Endothelial cell of umbilical vein (primary cell): ENCODE measurements at regions of chr7 and their contacts with region 1.

Region 1: GRCh38 chr7:35424869-35425495 is 171.1 kb upstream of the TBX20 start:
- DNase-seq: peak; percentile 53
- H3K4me3 ChIP-seq: no peak overlapping the region
- H3K27ac ChIP-seq: no peak overlapping the region
- H3K4me1 ChIP-seq: no peaks in the 10 kb centered on the region
- H3K27me3 ChIP-seq: peaks cover 0 to 5% of the 10 kb centered on the region in 2 experiments
- CTCF ChIP-seq: peak; percentile 68 to 79
- POLR2A ChIP-seq: no peak

Region 2: DNA sequence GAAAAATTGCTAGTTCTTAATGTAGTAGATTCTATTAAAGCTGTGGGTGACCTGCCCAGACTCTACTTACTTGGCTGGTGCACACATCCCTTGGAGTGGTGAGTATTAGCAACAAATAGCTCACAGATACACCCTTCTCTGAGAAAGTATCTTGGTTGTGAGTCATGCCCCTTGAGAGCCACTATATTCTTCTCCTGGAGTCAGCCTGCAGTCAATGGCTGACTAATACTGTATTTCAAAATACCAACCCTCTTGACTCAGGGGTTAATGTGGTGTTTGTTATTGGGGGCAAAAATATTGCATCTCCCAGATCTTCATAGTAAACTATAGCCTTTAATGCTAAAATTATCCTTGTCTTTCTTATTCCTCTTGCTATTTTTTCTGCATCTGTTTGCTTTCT is 1164.7 kb before region 1 on chr7:
- CTCF ChIA-PET with region 1: no interaction called
- POLR2A ChIA-PET with region 1: no interaction called
- dilution Hi-C with region 1: no loop called
- intact Hi-C with region 1: no loop called
- DNase-seq: peak; percentile 57
- H3K4me3 ChIP-seq: no peak overlapping the region
- H3K27ac ChIP-seq: no peak overlapping the region
- H3K4me1 ChIP-seq: peaks cover 4% of the 10 kb centered on the region
- H3K27me3 ChIP-seq: no peaks in the 10 kb centered on the region
- CTCF ChIP-seq: no peak
- POLR2A ChIP-seq: no peak

Region 3: GRCh38 chr7:35185907-35186731 is 238.9 kb before region 1 on chr7:
- CTCF ChIA-PET with region 1: no interaction called
- POLR2A ChIA-PET with region 1: no interaction called
- dilution Hi-C with region 1: no loop called
- intact Hi-C with region 1: loop called (anchors 10 kb)
- DNase-seq: peak; percentile 24
- H3K4me3 ChIP-seq: peak overlapping the region; percentile 8 to 34 (median 11)
- H3K27ac ChIP-seq: no peak overlapping the region
- H3K4me1 ChIP-seq: peaks cover 8% of the 10 kb centered on the region
- H3K27me3 ChIP-seq: peaks cover 7 to 17% of the 10 kb centered on the region in 2 experiments
- CTCF ChIP-seq: no peak
- POLR2A ChIP-seq: no peak

Region 4: DNA sequence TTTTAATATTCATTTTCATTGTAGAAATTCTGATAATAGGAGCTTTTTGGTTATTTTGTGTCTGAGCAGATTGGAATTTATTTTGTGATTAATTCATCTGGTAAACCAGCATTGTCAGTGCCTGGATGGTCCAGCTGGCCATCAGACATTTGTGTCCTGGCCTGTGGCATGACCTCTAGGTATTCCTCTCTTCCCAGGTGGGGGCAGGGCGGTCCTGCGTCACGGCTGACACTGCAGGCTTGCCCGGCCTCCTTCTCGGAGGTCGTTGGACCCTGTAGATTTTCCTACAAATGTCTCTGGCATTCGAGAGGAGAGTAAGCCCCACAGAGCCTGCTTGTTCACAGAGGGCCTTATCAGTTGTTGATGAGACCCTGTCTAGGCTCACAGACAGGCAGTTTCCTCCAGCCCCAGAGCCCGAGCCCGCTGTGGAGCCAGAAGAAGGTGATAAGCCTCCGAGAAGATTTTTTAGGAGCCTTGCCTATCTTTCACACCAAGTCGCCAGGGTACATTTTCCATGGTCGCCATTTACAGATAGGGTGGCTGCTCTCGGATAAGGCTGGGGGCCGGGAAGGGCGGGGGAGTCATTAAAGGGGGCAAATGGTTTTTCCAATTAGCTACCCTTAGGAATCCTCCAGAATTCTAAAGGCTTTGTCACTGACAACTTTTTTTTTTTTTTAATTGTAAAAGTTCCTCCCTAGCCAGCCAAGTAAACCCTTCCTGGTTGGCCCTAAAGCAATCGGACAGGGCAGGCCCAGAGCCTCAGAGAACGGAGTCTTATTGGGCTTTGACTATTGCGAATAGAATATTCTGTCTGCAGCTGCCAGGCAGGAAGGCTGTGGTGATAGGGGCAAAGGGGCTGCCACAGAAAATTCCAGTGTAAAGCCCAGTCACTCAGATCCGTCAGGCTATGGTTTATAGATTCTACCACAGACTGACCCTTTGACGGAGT is 93.0 kb before region 1 on chr7:
- CTCF ChIA-PET with region 1: no interaction called
- POLR2A ChIA-PET with region 1: no interaction called
- dilution Hi-C with region 1: no loop called
- intact Hi-C with region 1: no loop called
- DNase-seq: no peak
- H3K4me3 ChIP-seq: no peak overlapping the region
- H3K27ac ChIP-seq: no peak overlapping the region
- H3K4me1 ChIP-seq: no peaks in the 10 kb centered on the region
- H3K27me3 ChIP-seq: no peaks in the 10 kb centered on the region
- CTCF ChIP-seq: no peak
- POLR2A ChIP-seq: no peak

Region 5: DNA sequence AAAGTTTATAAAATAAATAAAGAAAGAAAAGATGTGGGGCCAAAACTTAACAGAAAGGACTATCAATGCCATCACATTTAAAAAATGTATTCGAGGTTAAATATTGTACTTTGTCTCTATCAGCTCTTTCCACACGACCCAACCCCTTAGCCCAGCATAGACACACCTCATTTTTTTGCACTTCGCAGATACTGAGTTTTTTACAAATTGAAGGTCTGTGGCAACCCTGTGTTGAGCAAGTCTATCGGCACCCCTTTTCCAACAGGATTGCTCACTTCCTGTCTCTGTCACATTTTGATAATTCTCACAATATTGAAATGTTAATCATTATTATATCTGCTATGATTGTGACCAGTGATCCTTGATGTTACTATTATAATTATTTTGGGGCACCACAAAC is 19.5 kb before region 1 on chr7:
- CTCF ChIA-PET with region 1: interaction called, 11 read pairs
- POLR2A ChIA-PET with region 1: no interaction called
- dilution Hi-C with region 1: no loop called
- intact Hi-C with region 1: no loop called
- DNase-seq: no peak
- H3K4me3 ChIP-seq: no peak overlapping the region
- H3K27ac ChIP-seq: no peak overlapping the region
- H3K4me1 ChIP-seq: no peaks in the 10 kb centered on the region
- H3K27me3 ChIP-seq: no peaks in the 10 kb centered on the region
- CTCF ChIP-seq: no peak
- POLR2A ChIP-seq: no peak

Region 6: GRCh38 chr7:35436452-35436851 is 11.5 kb after region 1 on chr7:
- CTCF ChIA-PET with region 1: interaction called, 17 read pairs
- POLR2A ChIA-PET with region 1: no interaction called
- dilution Hi-C with region 1: no loop called
- intact Hi-C with region 1: no loop called
- DNase-seq: no peak
- H3K4me3 ChIP-seq: no peak overlapping the region
- H3K27ac ChIP-seq: no peak overlapping the region
- H3K4me1 ChIP-seq: no peaks in the 10 kb centered on the region
- H3K27me3 ChIP-seq: no peaks in the 10 kb centered on the region
- CTCF ChIP-seq: no peak
- POLR2A ChIP-seq: no peak

Region 7: DNA sequence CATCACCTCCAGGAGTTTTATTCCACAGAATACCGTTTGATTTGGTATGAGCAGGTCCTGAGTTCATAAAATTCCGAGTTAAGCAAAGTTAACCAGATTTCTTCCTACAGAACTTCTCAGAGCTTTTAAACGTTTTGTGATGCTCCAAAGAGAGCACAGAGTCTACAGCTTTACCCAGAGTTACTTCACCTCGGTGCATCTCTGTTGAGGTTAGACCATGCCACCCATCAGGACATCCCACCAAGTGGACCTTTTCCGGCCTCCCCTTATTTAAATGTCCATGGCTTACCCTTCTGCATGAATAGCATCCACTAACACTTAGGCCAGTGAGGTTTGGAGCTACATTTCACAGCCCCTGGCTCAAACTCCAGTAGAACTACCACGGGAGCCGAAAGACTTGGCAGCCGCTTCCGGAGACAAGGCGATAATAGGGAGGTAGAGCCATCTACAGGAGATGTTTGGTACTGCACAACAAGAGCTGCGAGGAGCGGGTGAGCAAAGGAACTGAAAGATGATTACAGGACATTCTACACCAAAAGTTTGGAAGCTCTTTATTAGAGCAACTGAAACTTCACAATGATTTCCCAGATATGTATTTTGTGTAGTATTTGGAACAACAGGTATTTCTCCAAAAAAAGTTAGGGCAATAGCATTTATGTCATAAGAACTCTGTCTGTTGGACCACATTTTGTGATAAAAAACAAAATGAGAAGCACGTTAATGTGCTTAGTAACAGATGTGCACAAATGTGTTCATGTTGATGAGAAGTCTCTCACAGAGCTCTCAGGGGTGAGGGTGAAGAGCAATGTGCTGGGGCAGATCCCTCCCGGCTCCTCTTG is 95.2 kb after region 1 on chr7:
- CTCF ChIA-PET with region 1: interaction called, 28 read pairs
- POLR2A ChIA-PET with region 1: no interaction called
- dilution Hi-C with region 1: no loop called
- intact Hi-C with region 1: loop called (anchors 1 kb)
- DNase-seq: peak; percentile 46
- H3K4me3 ChIP-seq: no peak overlapping the region
- H3K27ac ChIP-seq: no peak overlapping the region
- H3K4me1 ChIP-seq: no peaks in the 10 kb centered on the region
- H3K27me3 ChIP-seq: peaks cover 4 to 15% of the 10 kb centered on the region in 2 experiments
- CTCF ChIP-seq: peak; percentile 68 to 74
- POLR2A ChIP-seq: no peak

Region 8: GRCh38 chr7:35537067-35538023 is 112.4 kb after region 1 on chr7:
- CTCF ChIA-PET with region 1: interaction called, 4 read pairs
- POLR2A ChIA-PET with region 1: no interaction called
- dilution Hi-C with region 1: no loop called
- intact Hi-C with region 1: loop called (anchors 1 kb)
- DNase-seq: peak; percentile 70
- H3K4me3 ChIP-seq: peak overlapping the region in 1 of 3 experiments; percentile 28
- H3K27ac ChIP-seq: no peak overlapping the region
- H3K4me1 ChIP-seq: no peaks in the 10 kb centered on the region
- H3K27me3 ChIP-seq: peaks cover 0 to 5% of the 10 kb centered on the region in 2 experiments
- CTCF ChIP-seq: peak; percentile 92 to 99
- POLR2A ChIP-seq: no peak

Region 9: GRCh38 chr7:35889001-35889400 is 464.0 kb after region 1 on chr7:
- CTCF ChIA-PET with region 1: no interaction called
- POLR2A ChIA-PET with region 1: no interaction called
- dilution Hi-C with region 1: no loop called
- intact Hi-C with region 1: no loop called
- DNase-seq: no peak
- H3K4me3 ChIP-seq: no peak overlapping the region
- H3K27ac ChIP-seq: no peak overlapping the region
- H3K4me1 ChIP-seq: no peaks in the 10 kb centered on the region
- H3K27me3 ChIP-seq: no peaks in the 10 kb centered on the region
- CTCF ChIP-seq: no peak
- POLR2A ChIP-seq: no peak

Region 10: DNA sequence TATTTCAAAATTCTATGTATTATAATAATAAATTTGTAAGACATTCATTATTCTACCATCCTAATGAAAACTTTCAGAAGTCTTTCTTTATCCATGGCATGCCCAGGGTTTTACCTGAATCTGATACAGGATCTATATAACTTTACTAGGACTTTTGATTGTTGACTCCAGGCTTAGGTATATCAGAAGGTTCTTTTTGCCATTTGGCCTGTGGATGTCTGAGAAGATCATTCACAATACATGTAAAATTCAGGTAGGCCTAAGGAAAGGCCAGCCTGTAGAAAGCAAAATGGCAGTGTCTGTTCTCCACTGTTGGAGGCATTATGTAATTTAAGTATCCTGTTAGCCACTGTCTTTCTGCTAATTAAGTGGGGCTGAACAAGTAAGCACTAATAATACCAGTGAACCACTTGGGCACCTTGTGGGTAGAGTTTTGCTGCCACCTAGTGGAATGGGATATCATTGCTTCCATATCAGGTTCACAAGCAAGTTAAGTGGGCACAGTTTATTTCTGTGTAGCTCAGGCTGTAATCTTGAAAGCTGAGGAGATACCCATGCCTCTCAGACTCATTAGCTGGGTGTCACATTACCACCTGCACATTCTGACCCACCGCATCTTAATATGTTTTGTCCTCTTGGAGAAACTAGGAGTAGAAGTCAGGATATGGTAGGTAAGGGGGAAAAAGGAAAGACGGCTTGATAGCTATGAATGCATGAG is 481.4 kb after region 1 on chr7:
- CTCF ChIA-PET with region 1: interaction called, 3 read pairs
- POLR2A ChIA-PET with region 1: no interaction called
- dilution Hi-C with region 1: no loop called
- intact Hi-C with region 1: loop called (anchors 10 kb)
- DNase-seq: peak; percentile 84
- H3K4me3 ChIP-seq: no peak overlapping the region
- H3K27ac ChIP-seq: no peak overlapping the region
- H3K4me1 ChIP-seq: no peaks in the 10 kb centered on the region
- H3K27me3 ChIP-seq: no peaks in the 10 kb centered on the region
- CTCF ChIP-seq: peak; percentile 70 to 77
- POLR2A ChIP-seq: no peak